ENCODE measurements at regions of chr1 and their contacts with region 1.

Region 1: GRCh38 chr1:15810073-15810472 is 2.6 kb upstream of the UQCRHL start:
- DNase-seq: no peak
- H3K4me3 ChIP-seq: no peak overlapping the region
- H3K27ac ChIP-seq: no peak overlapping the region
- H3K4me1 ChIP-seq: peaks cover 0 to 5% (median 0%) of the 10 kb centered on the region in 6 donors
- H3K27me3 ChIP-seq: no peaks in the 10 kb centered on the region
- CTCF ChIP-seq: no peak
- POLR2A ChIP-seq: no peak

Region 2: GRCh38 chr1:15771836-15772515 is 38.1 kb before region 1 on chr1:
- intact Hi-C with region 1: no loop called
- DNase-seq: no peak
- H3K4me3 ChIP-seq: no peak overlapping the region
- H3K27ac ChIP-seq: peak overlapping the region in 1 of 8 donors; percentile 21
- H3K4me1 ChIP-seq: peaks cover 0 to 9% (median 0%) of the 10 kb centered on the region in 6 donors
- H3K27me3 ChIP-seq: peaks cover 0 to 29% (median 0%) of the 10 kb centered on the region in 7 donors
- CTCF ChIP-seq: no peak
- POLR2A ChIP-seq: no peak

Region 3: DNA sequence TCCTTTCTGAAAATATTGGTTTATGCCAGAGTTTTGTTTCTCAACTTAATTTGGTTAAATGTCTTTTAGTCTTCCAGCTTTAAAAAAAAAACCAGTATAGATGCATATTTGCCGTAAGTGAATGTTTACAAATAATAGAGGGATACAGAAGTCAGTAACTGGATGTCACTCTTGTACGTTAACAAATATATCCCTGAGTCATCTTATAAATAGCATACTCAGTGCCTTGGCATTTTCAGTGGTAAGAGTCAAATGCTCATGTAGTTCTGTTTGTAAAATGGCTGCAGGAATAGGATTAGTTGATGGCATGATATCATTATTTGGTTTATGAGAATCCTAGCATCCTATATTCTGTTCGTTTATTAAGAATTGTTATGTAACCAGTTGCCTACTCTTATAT is 92.8 kb after region 1 on chr1:
- intact Hi-C with region 1: loop called (anchors 10 kb)
- DNase-seq: no peak
- H3K4me3 ChIP-seq: no peak overlapping the region
- H3K27ac ChIP-seq: no peak overlapping the region
- H3K4me1 ChIP-seq: peaks cover 2 to 68% (median 23%) of the 10 kb centered on the region in 6 donors
- H3K27me3 ChIP-seq: no peaks in the 10 kb centered on the region
- CTCF ChIP-seq: no peak
- POLR2A ChIP-seq: no peak

Measured in spleen (tissue), 13 donors.